CD4-positive, alpha-beta memory T cell (primary cell): ENCODE measurements at regions of chr6 and their contacts with region 1.

Region 1: DNA sequence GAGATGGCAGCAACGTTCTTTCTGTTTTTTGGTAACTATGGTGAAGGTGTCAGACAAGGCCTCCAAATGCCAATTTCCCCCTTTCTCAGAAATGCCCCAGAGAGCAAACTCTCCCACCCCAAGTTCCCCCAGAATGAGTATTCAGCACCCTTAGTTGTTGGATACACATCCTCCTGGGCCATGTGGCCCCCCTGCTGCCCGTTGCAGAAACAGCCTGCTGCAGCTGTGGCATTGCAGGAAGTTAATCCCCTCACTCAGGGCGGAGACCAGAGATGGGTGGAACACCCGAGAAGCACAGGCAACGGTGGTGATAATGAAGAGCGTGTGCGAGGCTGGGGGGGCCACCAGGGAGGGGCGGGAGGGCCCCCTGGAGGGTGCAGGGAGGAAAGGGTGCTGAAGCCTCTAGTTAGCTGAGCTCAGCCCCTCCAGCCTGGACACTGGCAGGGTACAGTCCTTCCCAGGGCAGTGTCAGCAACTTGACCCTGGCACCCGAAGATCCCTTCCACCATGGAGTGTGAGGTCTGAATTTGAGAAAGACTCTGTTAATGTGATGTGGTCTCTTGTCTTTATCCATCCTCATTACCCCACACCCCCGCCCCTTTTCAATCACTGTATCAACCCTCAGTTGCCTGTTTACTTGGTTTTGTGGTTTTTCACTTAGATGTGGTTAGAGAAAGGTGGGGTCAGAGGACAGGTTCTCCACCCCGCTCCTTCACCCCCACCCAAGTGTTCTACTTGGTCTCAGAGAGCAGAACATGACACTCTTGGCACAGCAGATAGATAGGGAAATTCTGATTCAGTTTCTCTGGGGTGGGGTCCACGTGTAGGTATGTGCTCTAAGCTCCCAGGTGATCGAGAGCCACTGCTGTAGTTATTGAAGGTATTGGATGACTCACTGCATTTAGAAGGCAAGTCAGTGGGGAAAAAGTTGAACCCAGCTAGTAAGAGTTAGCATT is 208.8 kb upstream of the SUPT3H start:
- DNase-seq: peak; percentile 89 to 93 (median 91)
- H3K4me3 ChIP-seq: peak overlapping the region in 1 of 2 donors; percentile 25
- H3K4me3 Mint-ChIP-seq: peak overlapping the region; percentile 70 to 94 (median 86)
- H3K27ac ChIP-seq: peak overlapping the region; percentile 17
- H3K27ac Mint-ChIP-seq: peak overlapping the region; percentile 92 to 98 (median 95)
- H3K4me1 ChIP-seq: peaks cover 66% of the 10 kb centered on the region
- H3K4me1 Mint-ChIP-seq: peaks cover 66 to 78% (median 73%) of the 10 kb centered on the region in 4 donors
- H3K27me3 ChIP-seq: no peaks in the 10 kb centered on the region
- H3K27me3 Mint-ChIP-seq: no peaks in the 10 kb centered on the region

Region 2: GRCh38 chr6:43964659-43965570 is 1621.6 kb before region 1 on chr6:
- CTCF ChIA-PET with region 1: no interaction called
- POLR2A ChIA-PET with region 1: no interaction called
- intact Hi-C with region 1: no loop called
- DNase-seq: no peak
- H3K4me3 ChIP-seq: no peak overlapping the region
- H3K4me3 Mint-ChIP-seq: no peak overlapping the region
- H3K27ac ChIP-seq: no peak overlapping the region
- H3K27ac Mint-ChIP-seq: peak overlapping the region in 1 of 7 donors; percentile 17
- H3K4me1 ChIP-seq: no peaks in the 10 kb centered on the region
- H3K4me1 Mint-ChIP-seq: no peaks in the 10 kb centered on the region
- H3K27me3 ChIP-seq: no peaks in the 10 kb centered on the region
- H3K27me3 Mint-ChIP-seq: peaks cover 7 to 8% of the 10 kb centered on the region in 2 donors

Region 3: GRCh38 chr6:45289751-45290514 is 296.6 kb before region 1 on chr6:
- CTCF ChIA-PET with region 1: no interaction called
- POLR2A ChIA-PET with region 1: no interaction called
- intact Hi-C with region 1: no loop called
- DNase-seq: no peak
- H3K4me3 ChIP-seq: no peak overlapping the region
- H3K4me3 Mint-ChIP-seq: no peak overlapping the region
- H3K27ac ChIP-seq: no peak overlapping the region
- H3K27ac Mint-ChIP-seq: peak overlapping the region in 1 of 7 donors; percentile 68
- H3K4me1 ChIP-seq: peaks cover 22% of the 10 kb centered on the region
- H3K4me1 Mint-ChIP-seq: peaks cover 21 to 38% (median 31%) of the 10 kb centered on the region in 4 donors
- H3K27me3 ChIP-seq: no peaks in the 10 kb centered on the region
- H3K27me3 Mint-ChIP-seq: no peaks in the 10 kb centered on the region

Region 4: GRCh38 chr6:45377554-45378333 is 208.8 kb before region 1 on chr6 and contains the start of gene SUPT3H:
- CTCF ChIA-PET with region 1: no interaction called
- POLR2A ChIA-PET with region 1: interaction called, 15 read pairs
- intact Hi-C with region 1: loop called (anchors 1 kb)
- DNase-seq: peak; percentile 88 to 96 (median 90)
- H3K4me3 ChIP-seq: peak within 1 kb of the TSS; percentile 72 to 96
- H3K4me3 Mint-ChIP-seq: peak within 1 kb of the TSS; percentile 93 to 99 (median 96)
- H3K27ac ChIP-seq: peak within 1 kb of the TSS; percentile 96
- H3K27ac Mint-ChIP-seq: peak within 1 kb of the TSS; percentile 95 to 99 (median 98)
- H3K4me1 ChIP-seq: peaks cover 17% of the 10 kb centered on the region
- H3K4me1 Mint-ChIP-seq: peaks cover 8 to 30% (median 19%) of the 10 kb centered on the region in 4 donors
- H3K27me3 ChIP-seq: no peaks in the 10 kb centered on the region
- H3K27me3 Mint-ChIP-seq: no peaks in the 10 kb centered on the region
- total RNA-seq, gene SUPT3H: 11.8 to 12.6 TPM

Region 5: GRCh38 chr6:45571159-45571558 is 15.3 kb before region 1 on chr6:
- CTCF ChIA-PET with region 1: interaction called, 17 read pairs
- POLR2A ChIA-PET with region 1: interaction called, 6 read pairs
- intact Hi-C with region 1: no loop called
- DNase-seq: no peak
- H3K4me3 ChIP-seq: no peak overlapping the region
- H3K4me3 Mint-ChIP-seq: peak overlapping the region in 1 of 8 donors; percentile 23
- H3K27ac ChIP-seq: no peak overlapping the region
- H3K27ac Mint-ChIP-seq: peak overlapping the region in 2 of 7 donors; percentile 22 to 45
- H3K4me1 ChIP-seq: peaks cover 16% of the 10 kb centered on the region
- H3K4me1 Mint-ChIP-seq: peaks cover 17 to 53% (median 38%) of the 10 kb centered on the region in 4 donors
- H3K27me3 ChIP-seq: no peaks in the 10 kb centered on the region
- H3K27me3 Mint-ChIP-seq: no peaks in the 10 kb centered on the region

Region 6: GRCh38 chr6:45619994-45620471 is 33.5 kb after region 1 on chr6:
- CTCF ChIA-PET with region 1: interaction called, 4 read pairs
- POLR2A ChIA-PET with region 1: interaction called, 7 read pairs
- intact Hi-C with region 1: loop called (anchors 5 kb)
- DNase-seq: peak in 4 of 5 donors; percentile 10 to 26 (median 16)
- H3K4me3 ChIP-seq: no peak overlapping the region
- H3K4me3 Mint-ChIP-seq: peak overlapping the region in 7 of 8 donors; percentile 3 to 73 (median 40)
- H3K27ac ChIP-seq: no peak overlapping the region
- H3K27ac Mint-ChIP-seq: peak overlapping the region in 6 of 7 donors; percentile 18 to 84 (median 74)
- H3K4me1 ChIP-seq: peaks cover 14% of the 10 kb centered on the region
- H3K4me1 Mint-ChIP-seq: peaks cover 12 to 32% (median 22%) of the 10 kb centered on the region in 4 donors
- H3K27me3 ChIP-seq: no peaks in the 10 kb centered on the region
- H3K27me3 Mint-ChIP-seq: no peaks in the 10 kb centered on the region

Region 7: GRCh38 chr6:45650524-45651135 is 64.1 kb after region 1 on chr6:
- CTCF ChIA-PET with region 1: no interaction called
- POLR2A ChIA-PET with region 1: no interaction called
- intact Hi-C with region 1: no loop called
- DNase-seq: no peak
- H3K4me3 ChIP-seq: no peak overlapping the region
- H3K4me3 Mint-ChIP-seq: no peak overlapping the region
- H3K27ac ChIP-seq: no peak overlapping the region
- H3K27ac Mint-ChIP-seq: no peak overlapping the region
- H3K4me1 ChIP-seq: no peaks in the 10 kb centered on the region
- H3K4me1 Mint-ChIP-seq: peaks cover 0 to 15% (median 6%) of the 10 kb centered on the region in 4 donors
- H3K27me3 ChIP-seq: no peaks in the 10 kb centered on the region
- H3K27me3 Mint-ChIP-seq: peaks cover 0 to 2% of the 10 kb centered on the region in 2 donors

Region 8: DNA sequence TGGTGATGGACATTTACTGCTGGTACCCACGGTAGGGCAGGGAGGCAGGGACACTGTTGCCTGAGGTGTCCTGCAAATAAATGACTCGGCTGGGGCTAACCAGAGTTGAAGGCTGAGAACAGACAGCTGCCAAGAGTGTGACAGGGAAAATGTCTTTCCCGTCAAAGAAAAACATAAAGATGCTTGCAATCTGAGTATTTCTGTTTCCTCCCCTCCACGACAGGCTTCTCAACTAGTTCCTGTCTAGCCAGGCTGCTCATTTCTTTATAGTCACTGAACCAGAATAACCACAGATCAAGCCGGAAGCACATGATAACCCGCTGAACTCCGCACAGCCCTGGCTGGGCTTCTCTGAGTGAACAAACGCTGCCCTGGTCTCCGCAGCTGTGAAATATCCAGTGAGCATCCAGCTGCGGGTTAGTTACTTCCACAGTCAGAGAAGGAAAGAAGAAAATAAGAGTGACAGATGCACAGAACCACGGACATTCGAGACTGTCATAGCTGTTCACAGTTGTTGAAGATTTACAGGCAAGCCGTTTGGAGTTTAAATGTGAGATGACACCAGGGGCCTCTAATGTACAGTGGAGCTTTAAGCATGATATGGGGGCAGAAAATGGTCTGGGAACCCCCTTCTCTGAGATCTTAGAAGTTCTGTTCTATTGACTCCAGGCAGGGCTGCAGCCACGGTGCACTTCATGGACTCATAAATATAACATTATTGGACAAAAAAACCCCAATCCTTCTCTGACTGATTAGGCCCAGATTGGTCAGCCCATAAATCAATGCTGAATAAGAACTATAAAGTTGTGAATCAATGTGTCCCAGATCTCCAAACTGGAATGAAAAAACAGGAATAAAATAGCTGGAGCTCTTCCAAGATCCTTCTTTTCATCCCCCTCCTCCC is 91.1 kb after region 1 on chr6:
- CTCF ChIA-PET with region 1: no interaction called
- POLR2A ChIA-PET with region 1: interaction called, 13 read pairs
- intact Hi-C with region 1: no loop called
- DNase-seq: peak; percentile 52 to 68 (median 58)
- H3K4me3 ChIP-seq: peak overlapping the region in 1 of 2 donors; percentile 27
- H3K4me3 Mint-ChIP-seq: peak overlapping the region; percentile 72 to 86 (median 79)
- H3K27ac ChIP-seq: peak overlapping the region; percentile 3
- H3K27ac Mint-ChIP-seq: peak overlapping the region; percentile 9 to 81 (median 73)
- H3K4me1 ChIP-seq: peaks cover 34% of the 10 kb centered on the region
- H3K4me1 Mint-ChIP-seq: peaks cover 25 to 53% (median 32%) of the 10 kb centered on the region in 4 donors
- H3K27me3 ChIP-seq: no peaks in the 10 kb centered on the region
- H3K27me3 Mint-ChIP-seq: no peaks in the 10 kb centered on the region